Right ventricle myocardium inferior (tissue), 1 donor: ENCODE measurements at regions of chr3 and their contacts with region 1.

Region 1: DNA sequence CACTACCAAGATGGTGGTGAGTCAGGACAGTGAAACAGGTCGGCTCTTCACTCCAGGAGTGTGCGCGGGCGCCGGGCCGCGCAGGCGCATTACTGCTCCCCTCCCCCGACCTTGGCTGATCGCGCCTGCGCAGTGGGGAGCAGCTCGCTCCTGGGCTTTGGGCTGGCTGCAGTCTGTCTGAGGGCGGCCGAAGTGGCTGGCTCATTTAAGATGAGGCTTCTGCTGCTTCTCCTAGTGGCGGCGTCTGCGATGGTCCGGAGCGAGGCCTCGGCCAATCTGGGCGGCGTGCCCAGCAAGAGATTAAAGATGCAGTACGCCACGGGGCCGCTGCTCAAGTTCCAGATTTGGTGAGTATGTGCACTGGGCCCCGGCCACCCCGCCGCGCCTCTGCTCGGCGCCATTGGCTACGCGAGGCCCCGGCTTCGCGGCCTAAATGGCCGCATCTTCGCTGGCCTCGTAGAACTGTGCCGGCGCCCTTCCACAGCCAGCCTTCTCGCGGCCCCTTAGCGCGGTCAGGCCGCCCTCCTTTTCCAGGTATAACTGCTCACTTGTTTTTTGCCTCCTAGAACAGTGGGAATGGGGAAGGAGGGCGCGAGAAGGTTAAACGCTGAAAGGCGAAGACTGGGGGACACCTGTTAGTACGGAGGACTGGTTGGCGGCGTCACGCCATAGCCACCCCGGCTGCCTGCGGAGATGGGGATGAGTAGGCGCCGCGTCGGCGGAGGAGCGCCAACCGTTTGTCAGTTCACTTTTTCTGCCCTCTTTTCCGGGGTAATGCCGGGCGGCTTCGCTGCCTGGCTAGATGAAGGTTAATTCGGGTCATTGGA is at the start of gene SELENOT:
- DNase-seq: peak; percentile 97
- ATAC-seq: peak; percentile 97
- total RNA-seq, gene SELENOT: 69.3 TPM

Region 2: DNA sequence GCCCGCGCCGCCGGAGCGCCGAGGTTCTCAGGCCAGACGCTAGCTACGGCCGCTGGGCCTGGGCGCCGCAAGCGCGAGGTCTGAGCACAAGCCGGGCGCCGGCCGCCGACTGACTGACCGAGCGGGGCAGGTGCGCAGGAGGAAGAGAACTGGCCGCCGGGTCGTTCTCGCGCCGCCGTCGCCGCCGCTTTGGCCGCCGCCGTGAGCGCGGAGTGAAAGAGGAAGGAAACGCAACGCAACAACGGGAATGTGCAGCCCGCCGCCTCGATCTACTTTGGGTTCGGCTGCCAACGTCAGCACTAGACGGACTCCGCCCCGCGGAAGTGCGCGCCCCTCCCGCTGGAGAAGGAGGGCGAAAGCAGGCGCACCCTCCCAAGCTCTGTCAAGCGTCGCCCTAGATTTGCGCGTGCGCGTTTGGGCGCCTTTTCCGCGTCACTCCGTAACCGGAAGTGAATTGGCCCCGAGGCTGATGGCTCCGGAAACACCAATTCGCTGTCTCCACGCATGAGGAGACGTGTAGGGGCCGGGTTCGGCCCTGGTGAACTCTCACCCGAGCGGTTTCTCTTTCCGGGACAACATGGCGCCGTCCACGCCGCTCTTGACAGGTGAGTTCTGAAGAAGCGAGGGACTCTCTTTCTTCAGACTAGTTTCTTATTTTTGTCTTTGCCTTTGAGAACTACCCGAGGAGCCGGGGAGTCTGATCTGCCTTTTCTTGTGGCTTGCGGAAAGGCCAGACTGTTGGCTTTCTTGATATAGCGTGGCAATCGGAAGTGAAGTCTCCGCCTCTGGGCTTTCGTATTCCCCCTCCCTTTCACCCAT is 56.9 kb before region 1 on chr3 and contains the starts of genes EIF2A and SERP1:
- intact Hi-C with region 1: loop called (anchors 1 kb)
- DNase-seq: peak; percentile 99
- ATAC-seq: peak; percentile 98
- total RNA-seq, gene EIF2A: 68.9 TPM
- total RNA-seq, gene SERP1: 23.7 TPM

Region 3: GRCh38 chr3:150703299-150704134 is 100.2 kb after region 1 on chr3 and contains the start of gene ERICH6:
- intact Hi-C with region 1: loop called (anchors 5 kb)
- DNase-seq: peak; percentile 97
- ATAC-seq: peak; percentile 99
- total RNA-seq, gene ERICH6: not detected

Region 4: GRCh38 chr3:150763122-150763841 is 159.9 kb after region 1 on chr3 and contains the start of gene SIAH2:
- intact Hi-C with region 1: loop called (anchors 1 kb)
- DNase-seq: peak; percentile 97
- ATAC-seq: peak; percentile 91
- total RNA-seq, gene SIAH2: 20.6 TPM